Ascending aorta (tissue), 2 donors: ENCODE measurements at regions of chr3 and their contacts with region 1.

Region 1: GRCh38 chr3:24401090-24401810 is 93.4 kb downstream of the THRB start:
- DNase-seq: no peak
- H3K4me3 ChIP-seq: no peak overlapping the region
- H3K27ac ChIP-seq: peak overlapping the region; percentile 68 to 71
- H3K4me1 ChIP-seq: peaks cover 4 to 14% of the 10 kb centered on the region in 2 donors
- H3K27me3 ChIP-seq: no peaks in the 10 kb centered on the region
- CTCF ChIP-seq: no peak

Region 2: GRCh38 chr3:24475925-24476324 is 74.7 kb after region 1 on chr3:
- intact Hi-C with region 1: loop called (anchors 5 kb)
- DNase-seq: no peak
- H3K4me3 ChIP-seq: no peak overlapping the region
- H3K27ac ChIP-seq: peak overlapping the region in 1 of 2 donors; percentile 24
- H3K4me1 ChIP-seq: peaks cover 0 to 23% of the 10 kb centered on the region in 2 donors
- H3K27me3 ChIP-seq: no peaks in the 10 kb centered on the region
- CTCF ChIP-seq: no peak